HepG2 (cell line): ENCODE measurements at regions of chr2 and their contacts with region 1.

Region 1: GRCh38 chr2:49737606-49738005 is 583.3 kb upstream of the FSHR start:
- DNase-seq: no peak
- ATAC-seq: no peak
- H3K4me3 ChIP-seq: no peak overlapping the region
- H3K27ac ChIP-seq: no peak overlapping the region
- H3K4me1 ChIP-seq: no peaks in the 10 kb centered on the region
- H3K27me3 ChIP-seq: no peaks in the 10 kb centered on the region
- CTCF ChIP-seq: no peak
- EP300 ChIP-seq: no peak
- POLR2A ChIP-seq: no peak
- RAD21 ChIP-seq: no peak

Region 2: GRCh38 chr2:50674876-50675275 is 937.3 kb after region 1 on chr2:
- CTCF ChIA-PET with region 1: no interaction called
- POLR2A ChIA-PET with region 1: no interaction called
- in situ Hi-C with region 1: no loop called
- intact Hi-C with region 1: no loop called
- DNase-seq: peak; percentile 9
- ATAC-seq: no peak; the same call in 2 of the 3 replicates
- H3K4me3 ChIP-seq: no peak overlapping the region
- H3K27ac ChIP-seq: no peak overlapping the region
- H3K4me1 ChIP-seq: no peaks in the 10 kb centered on the region
- H3K27me3 ChIP-seq: no peaks in the 10 kb centered on the region
- CTCF ChIP-seq: peak; percentile 60
- EP300 ChIP-seq: no peak
- POLR2A ChIP-seq: no peak
- RAD21 ChIP-seq: no peak

Region 3: DNA sequence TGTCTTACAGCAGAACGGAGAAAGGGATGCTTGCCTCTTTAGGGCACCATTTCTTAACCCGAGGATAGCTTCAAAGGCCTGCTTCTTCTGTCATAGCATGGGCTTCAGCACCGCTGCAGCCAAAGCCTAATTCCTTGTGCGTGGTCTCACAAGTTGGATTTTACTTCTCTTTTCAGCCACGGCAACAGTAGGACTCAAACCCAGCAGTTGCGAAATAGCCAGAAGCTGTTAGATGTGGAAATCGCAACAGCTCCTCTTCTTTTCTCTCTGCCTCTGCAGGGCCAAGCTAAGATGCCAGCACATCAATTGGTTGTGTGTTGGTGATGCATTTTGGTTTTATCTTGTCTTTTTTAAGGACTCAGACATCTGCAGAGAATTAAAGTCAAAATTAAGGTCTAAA is 1291.2 kb after region 1 on chr2:
- CTCF ChIA-PET with region 1: no interaction called
- POLR2A ChIA-PET with region 1: no interaction called
- in situ Hi-C with region 1: no loop called
- intact Hi-C with region 1: loop called (anchors 10 kb)
- DNase-seq: no peak
- ATAC-seq: no peak
- H3K4me3 ChIP-seq: no peak overlapping the region
- H3K27ac ChIP-seq: no peak overlapping the region
- H3K4me1 ChIP-seq: no peaks in the 10 kb centered on the region
- H3K27me3 ChIP-seq: no peaks in the 10 kb centered on the region; a peak in 1 of 5 replicates
- CTCF ChIP-seq: no peak
- EP300 ChIP-seq: no peak
- POLR2A ChIP-seq: no peak
- RAD21 ChIP-seq: no peak